Sigmoid colon (tissue), 7 donors: ENCODE measurements at regions of chr12 and their contacts with region 1.

Region 1: DNA sequence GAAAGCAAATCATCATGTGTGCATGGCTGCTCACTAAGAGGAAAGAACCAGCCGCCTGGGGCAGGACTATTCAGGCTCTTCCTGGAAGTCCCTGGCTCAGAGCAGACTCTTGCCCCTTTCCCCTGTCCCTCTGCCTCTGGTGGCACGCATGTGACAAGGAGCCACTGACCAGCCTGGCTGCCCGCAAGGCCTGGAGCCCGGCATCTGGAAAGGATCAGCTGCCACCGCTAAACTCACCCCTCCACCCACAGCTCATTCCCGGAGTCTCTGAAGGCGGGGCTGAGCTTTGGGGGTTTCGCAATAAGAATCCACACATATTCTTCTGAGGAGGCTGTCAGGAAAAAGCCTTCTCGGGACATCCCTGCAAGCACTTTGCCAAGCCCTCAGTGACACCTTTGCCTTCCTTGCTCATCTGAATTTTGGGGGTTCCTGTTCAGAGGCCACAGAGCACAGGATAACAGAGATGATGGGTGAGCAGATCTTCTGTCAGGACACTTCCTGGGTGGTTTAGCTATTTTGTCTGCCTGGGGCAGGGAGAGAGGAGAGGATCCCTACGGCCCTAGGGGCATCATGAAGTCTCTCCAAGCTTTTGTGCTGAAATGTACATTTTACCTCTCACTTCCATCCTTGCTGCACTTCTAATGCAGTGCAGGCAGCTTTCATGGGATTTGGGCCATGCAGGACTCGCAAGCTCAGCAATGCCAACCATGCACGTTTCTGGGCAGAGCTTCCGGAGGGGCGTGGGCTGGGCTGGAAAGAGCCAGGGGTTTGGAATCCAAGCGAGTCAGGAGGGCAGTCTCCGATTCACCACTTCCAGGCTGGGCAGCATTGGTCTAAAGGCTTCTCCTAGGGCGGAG is 124.8 kb upstream of the MAP1LC3B2 start:
- DNase-seq: peak; percentile 95
- H3K4me3 ChIP-seq: peak overlapping the region in 3 of 4 donors; percentile 14 to 30 (median 18)
- H3K27ac ChIP-seq: peak overlapping the region; percentile 69 to 89 (median 80)
- H3K4me1 ChIP-seq: peaks cover 0 to 31% (median 23%) of the 10 kb centered on the region in 4 donors
- H3K27me3 ChIP-seq: no peaks in the 10 kb centered on the region
- CTCF ChIP-seq: no peak
- EP300 ChIP-seq: peak; percentile 45 to 92 (median 69)
- POLR2A ChIP-seq: no peak

Region 2: DNA sequence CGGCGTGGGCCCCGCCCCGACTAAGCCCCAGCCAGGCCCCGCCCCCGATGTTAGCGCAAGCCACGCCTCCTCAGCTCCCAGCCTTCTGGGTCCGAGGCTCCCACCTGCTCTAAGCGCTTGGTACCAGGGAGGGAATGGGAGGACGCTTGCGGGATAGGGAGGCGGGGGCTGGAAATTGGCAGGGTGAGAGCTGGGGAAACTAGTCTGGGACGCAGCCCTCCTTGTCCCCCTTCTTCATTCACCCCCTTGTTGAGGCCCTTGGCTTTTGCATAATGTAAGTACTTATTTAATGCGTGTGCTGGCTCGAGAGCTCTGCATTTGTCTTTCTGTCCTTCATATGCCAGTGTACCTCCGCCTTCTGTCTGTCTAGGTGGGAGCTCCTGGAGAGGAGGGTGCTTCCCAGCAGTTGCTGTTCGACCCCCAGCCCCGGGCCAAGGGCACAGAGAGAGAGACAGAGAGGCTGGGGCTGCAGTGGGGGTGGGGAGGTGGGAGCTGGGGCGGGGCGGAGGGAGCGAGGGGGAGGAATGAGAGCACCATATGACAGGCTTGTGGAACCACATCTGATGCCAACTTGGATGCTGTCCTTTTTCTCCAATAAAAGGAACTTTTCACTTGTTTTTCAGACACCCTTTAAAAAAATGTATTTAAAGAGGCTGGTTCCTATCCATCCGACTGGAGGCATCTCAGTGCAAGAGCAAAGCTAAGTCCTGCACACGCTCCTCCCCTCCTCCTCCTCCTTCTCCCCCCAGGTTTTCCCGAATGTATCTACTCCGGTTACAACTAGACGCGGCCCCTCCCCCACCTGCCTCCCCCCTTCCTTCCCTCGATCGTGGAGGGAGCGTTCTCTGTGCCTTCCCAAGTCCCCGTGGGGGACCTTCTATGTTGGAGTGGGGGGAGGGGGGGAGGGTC is 99.2 kb after region 1 on chr12:
- intact Hi-C with region 1: loop called (anchors 5 kb)
- DNase-seq: peak; percentile 93
- H3K4me3 ChIP-seq: peak overlapping the region; percentile 42 to 61 (median 52)
- H3K27ac ChIP-seq: peak overlapping the region; percentile 83 to 89 (median 84)
- H3K4me1 ChIP-seq: peaks cover 0 to 30% (median 28%) of the 10 kb centered on the region in 4 donors
- H3K27me3 ChIP-seq: no peaks in the 10 kb centered on the region
- CTCF ChIP-seq: no peak
- EP300 ChIP-seq: peak in 1 of 4 donors; percentile 22
- POLR2A ChIP-seq: no peak